AG04449 (cell line): ENCODE measurements at regions of chr4 and their contacts with region 1.

Region 1: GRCh38 chr4:142719854-142720541 is 126.1 kb downstream of the INPP4B start:
- DNase-seq: no peak
- H3K4me3 ChIP-seq: no peak overlapping the region
- CTCF ChIP-seq: peak; percentile 21

Region 2: DNA sequence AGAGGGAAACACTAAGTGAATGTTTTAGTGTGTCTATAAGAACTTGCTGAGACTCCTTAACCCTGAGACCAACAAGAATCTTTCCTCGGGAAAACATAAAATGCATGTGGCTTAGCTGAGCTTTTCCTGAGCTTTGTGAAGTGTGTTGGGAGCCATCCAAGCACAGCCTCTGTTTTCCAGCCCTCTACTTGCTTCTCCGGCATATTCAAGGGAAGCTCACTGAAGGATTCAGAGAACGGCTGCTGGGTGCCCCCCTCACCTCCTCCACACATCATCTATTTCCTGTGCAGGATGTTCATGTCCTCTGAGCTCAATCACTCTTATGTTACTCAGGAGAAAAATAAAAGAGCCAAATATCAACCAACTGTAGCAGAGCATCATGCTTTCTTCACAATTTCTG is 591.5 kb before region 1 on chr4:
- CTCF ChIA-PET with region 1: interaction called, 12 read pairs
- POLR2A ChIA-PET with region 1: no interaction called
- DNase-seq: peak; percentile 4
- H3K4me3 ChIP-seq: no peak overlapping the region
- CTCF ChIP-seq: no peak